ENCODE measurements at regions of chr17 and their contacts with region 1.

Region 1: GRCh38 chr17:36948717-36949460 is at the start of gene AATF:
- DNase-seq: peak; percentile 97
- ATAC-seq: peak; percentile 95
- H3K4me3 Mint-ChIP-seq: peak within 1 kb of the TSS; percentile 92
- H3K27ac Mint-ChIP-seq: peak within 1 kb of the TSS; percentile 93
- H3K4me1 Mint-ChIP-seq: peaks cover 49% of the 10 kb centered on the region
- H3K27me3 Mint-ChIP-seq: peaks cover 18% of the 10 kb centered on the region
- CTCF ChIP-seq: no peak
- total RNA-seq, gene AATF: 73.2 and 86.1 TPM in 2 replicates

Region 2: GRCh38 chr17:36722121-36722902 is 226.6 kb before region 1 on chr17:
- CTCF ChIA-PET with region 1: no interaction called
- POLR2A ChIA-PET with region 1: interaction called, 6 read pairs
- intact Hi-C with region 1: loop called (anchors 2 kb)
- DNase-seq: peak; percentile 82
- ATAC-seq: peak; percentile 94
- H3K4me3 Mint-ChIP-seq: peak overlapping the region; percentile 85
- H3K27ac Mint-ChIP-seq: peak overlapping the region; percentile 90
- H3K4me1 Mint-ChIP-seq: peaks cover 54% of the 10 kb centered on the region
- H3K27me3 Mint-ChIP-seq: peaks cover 2% of the 10 kb centered on the region
- CTCF ChIP-seq: no peak

Region 3: DNA sequence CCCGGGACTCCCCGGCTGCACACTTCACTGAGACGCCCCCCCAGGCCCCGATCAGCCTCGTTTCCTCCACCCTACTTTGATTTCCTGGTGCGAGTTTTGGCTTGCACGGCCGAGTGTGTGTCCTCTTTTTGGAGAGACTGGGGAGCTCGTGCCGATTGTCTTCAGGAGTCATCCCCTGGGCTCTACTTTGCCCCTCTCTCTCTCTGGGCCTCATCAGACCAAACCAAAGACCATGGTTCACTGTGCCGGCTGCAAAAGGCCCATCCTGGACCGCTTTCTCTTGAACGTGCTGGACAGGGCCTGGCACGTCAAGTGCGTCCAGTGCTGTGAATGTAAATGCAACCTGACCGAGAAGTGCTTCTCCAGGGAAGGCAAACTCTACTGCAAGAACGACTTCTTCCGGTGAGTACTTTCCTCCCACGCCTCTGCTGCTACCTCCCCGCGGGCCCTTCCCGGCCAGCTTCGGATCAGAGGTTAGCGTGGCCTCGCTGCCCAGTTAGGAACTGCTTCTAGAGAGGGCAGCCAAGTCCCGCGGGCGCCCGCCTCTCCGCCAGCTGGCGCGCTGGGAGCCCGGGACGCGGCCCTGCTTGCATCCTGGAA is 10.8 kb before region 1 on chr17:
- CTCF ChIA-PET with region 1: no interaction called
- POLR2A ChIA-PET with region 1: interaction called, 11 read pairs
- intact Hi-C with region 1: loop called (anchors 1 kb)
- DNase-seq: peak; percentile 30
- ATAC-seq: no peak
- H3K4me3 Mint-ChIP-seq: peak overlapping the region; percentile 76
- H3K27ac Mint-ChIP-seq: peak overlapping the region; percentile 24
- H3K4me1 Mint-ChIP-seq: peaks cover 58% of the 10 kb centered on the region
- H3K27me3 Mint-ChIP-seq: peaks cover 68% of the 10 kb centered on the region
- CTCF ChIP-seq: no peak

Region 4: GRCh38 chr17:36989173-36989572 is 40.3 kb after region 1 on chr17:
- CTCF ChIA-PET with region 1: no interaction called
- POLR2A ChIA-PET with region 1: no interaction called
- intact Hi-C with region 1: no loop called
- DNase-seq: no peak
- ATAC-seq: no peak
- H3K4me3 Mint-ChIP-seq: no peak overlapping the region
- H3K27ac Mint-ChIP-seq: no peak overlapping the region
- H3K4me1 Mint-ChIP-seq: peaks cover under 1% of the 10 kb centered on the region
- H3K27me3 Mint-ChIP-seq: no peaks in the 10 kb centered on the region
- CTCF ChIP-seq: no peak